CD14-positive monocyte (primary cell): ENCODE measurements at regions of chr6 and their contacts with region 1.

Region 1: DNA sequence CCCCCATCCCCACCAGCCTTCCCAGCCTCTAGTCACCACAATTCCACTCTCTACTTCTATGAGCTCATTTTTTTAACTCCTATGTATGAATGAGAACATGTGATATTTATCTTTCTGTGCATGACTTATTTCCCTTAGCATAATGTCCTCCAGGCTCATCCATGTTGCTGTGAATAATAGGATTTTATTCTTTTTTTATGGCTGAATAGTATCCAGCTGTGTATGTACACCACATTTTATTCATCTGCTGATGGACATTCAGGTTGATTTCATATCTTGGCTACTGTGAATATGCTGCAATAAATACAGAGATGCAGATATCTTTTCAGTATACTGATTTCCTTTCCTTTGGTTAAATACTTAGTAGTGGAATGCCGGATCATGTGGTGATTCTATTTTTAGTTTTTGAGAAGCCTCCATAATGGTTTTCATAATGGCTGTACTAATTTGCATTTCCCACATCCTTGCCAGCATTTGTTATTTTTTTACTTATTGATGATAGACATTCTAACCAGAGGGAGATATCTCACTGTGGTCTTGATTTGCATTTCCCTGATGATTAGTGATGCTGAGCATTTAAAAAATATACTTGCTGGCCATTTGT is 194.9 kb downstream of the PACRG start:
- DNase-seq: no peak
- H3K4me3 ChIP-seq: no peak overlapping the region
- H3K4me3 Mint-ChIP-seq: no peak overlapping the region
- H3K27ac ChIP-seq: no peak overlapping the region
- H3K27ac Mint-ChIP-seq: no peak overlapping the region
- H3K4me1 ChIP-seq: no peaks in the 10 kb centered on the region
- H3K4me1 Mint-ChIP-seq: no peaks in the 10 kb centered on the region
- H3K27me3 ChIP-seq: no peaks in the 10 kb centered on the region
- H3K27me3 Mint-ChIP-seq: no peaks in the 10 kb centered on the region
- CTCF ChIP-seq: no peak

Region 2: DNA sequence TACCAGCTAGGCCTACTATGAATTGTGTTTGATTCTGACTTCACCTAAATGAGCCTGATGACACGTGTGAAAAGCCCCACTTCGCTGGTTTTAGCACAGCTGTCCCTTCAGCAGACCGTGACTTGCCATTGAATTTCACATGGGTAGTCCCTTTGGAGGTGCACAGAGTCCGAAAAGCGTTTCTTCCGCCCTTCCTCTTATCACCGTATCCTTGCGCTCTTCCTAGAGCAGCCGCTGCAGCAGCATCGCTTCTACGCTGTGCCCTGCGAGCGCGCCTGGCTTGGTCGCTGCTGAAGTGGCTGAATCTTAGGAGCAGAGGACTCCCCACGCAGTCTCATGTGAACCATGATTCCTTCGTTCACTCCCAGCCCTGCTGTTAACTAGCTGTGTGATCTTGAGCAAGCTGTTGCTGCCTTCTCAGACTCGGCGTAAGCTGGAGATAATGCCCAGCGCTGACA is 67.9 kb before region 1 on chr6:
- intact Hi-C with region 1: loop called in 1 of 2 experiments (anchors 2 kb)
- DNase-seq: no peak
- H3K4me3 ChIP-seq: no peak overlapping the region
- H3K4me3 Mint-ChIP-seq: no peak overlapping the region
- H3K27ac ChIP-seq: no peak overlapping the region
- H3K27ac Mint-ChIP-seq: peak overlapping the region in 1 of 7 donors; percentile 52
- H3K4me1 ChIP-seq: no peaks in the 10 kb centered on the region
- H3K4me1 Mint-ChIP-seq: no peaks in the 10 kb centered on the region
- H3K27me3 ChIP-seq: no peaks in the 10 kb centered on the region
- H3K27me3 Mint-ChIP-seq: peaks cover 0 to 2% (median 0%) of the 10 kb centered on the region in 3 donors
- CTCF ChIP-seq: no peak